ENCODE measurements at regions of chr2 and their contacts with region 1.

Region 1: DNA sequence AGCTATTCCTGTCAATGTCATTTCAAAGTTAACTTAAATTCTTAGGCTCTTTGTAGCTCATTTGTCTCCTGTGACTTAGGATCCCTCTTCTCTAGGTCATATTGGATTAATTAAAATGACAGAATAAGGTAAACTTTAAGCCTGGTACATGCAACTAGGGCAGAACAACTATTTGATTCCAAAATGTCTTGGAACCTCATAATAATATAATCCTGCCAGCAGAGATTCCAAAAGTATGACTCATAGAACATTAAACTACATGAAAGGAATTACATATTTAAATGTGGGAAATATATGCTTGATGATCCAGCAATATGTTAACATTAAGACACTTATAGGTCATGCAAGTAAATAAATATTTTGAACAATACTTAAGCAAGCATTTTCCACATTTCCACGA is 63.3 kb downstream of the COL3A1 start:
- DNase-seq: no peak
- H3K4me3 ChIP-seq: no peak overlapping the region
- H3K27ac ChIP-seq: no peak overlapping the region
- H3K4me1 ChIP-seq: no peaks in the 10 kb centered on the region
- H3K27me3 ChIP-seq: no peaks in the 10 kb centered on the region
- CTCF ChIP-seq: no peak
- EP300 ChIP-seq: no peak
- POLR2A ChIP-seq: no peak
- RAD21 ChIP-seq: no peak

Region 2: DNA sequence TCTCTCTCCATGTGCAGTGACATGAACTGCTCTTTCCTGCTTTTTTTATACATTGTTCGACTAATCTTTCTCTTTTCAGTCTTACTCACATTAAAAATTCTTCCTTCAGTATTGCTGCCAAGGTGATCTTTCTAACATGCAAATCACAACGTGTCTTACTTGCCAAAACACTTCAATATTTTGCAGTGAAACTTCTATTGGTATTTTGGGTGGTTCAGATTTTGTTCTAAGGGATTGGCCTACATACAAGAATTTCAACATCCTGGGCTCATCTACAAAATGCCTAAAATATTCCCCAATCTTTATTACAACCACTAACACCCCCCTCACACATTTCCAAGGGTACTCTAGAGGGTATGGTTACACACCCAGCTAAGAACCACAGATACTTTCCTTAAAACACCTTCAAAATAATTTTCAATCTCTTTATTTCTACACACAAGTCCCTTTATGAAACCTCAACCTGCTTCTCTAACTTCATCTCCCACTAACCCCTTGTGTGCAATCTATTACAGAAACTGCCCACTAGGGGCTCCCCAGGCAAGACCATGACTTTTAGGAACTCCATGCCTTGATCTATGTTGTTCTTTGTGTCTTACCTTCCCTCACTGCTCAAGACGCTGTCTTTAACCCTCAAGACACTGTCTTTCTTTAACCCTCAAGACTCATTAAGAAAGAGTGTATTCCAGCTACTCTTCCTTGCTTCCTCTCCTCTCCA is 12.5 kb before region 1 on chr2:
- CTCF ChIA-PET with region 1: interaction called, 12 read pairs
- POLR2A ChIA-PET with region 1: no interaction called
- DNase-seq: peak in 1 of 2 experiments; percentile 7
- H3K4me3 ChIP-seq: no peak overlapping the region
- H3K27ac ChIP-seq: no peak overlapping the region
- H3K4me1 ChIP-seq: no peaks in the 10 kb centered on the region
- H3K27me3 ChIP-seq: no peaks in the 10 kb centered on the region
- CTCF ChIP-seq: peak in 2 of 3 experiments; percentile 59 to 84; a peak in 3 of 4 replicates
- EP300 ChIP-seq: no peak
- POLR2A ChIP-seq: no peak
- RAD21 ChIP-seq: peak; percentile 64 to 69